ENCODE measurements at regions of chr1 and their contacts with region 1.

Region 1: GRCh38 chr1:2556277-2556677 is at the start of gene TNFRSF14:
- DNase-seq: peak; percentile 73
- H3K4me3 Mint-ChIP-seq: peak within 1 kb of the TSS; percentile 88
- H3K27ac Mint-ChIP-seq: peak within 1 kb of the TSS; percentile 86
- H3K4me1 Mint-ChIP-seq: peaks cover 21% of the 10 kb centered on the region
- H3K27me3 Mint-ChIP-seq: no peaks in the 10 kb centered on the region
- total RNA-seq, gene TNFRSF14: 207 and 215 TPM in 2 replicates

Region 2: GRCh38 chr1:2514863-2515762 is 41.2 kb before region 1 on chr1:
- intact Hi-C with region 1: no loop called
- DNase-seq: no peak
- H3K4me3 Mint-ChIP-seq: no peak overlapping the region
- H3K27ac Mint-ChIP-seq: no peak overlapping the region
- H3K4me1 Mint-ChIP-seq: no peaks in the 10 kb centered on the region
- H3K27me3 Mint-ChIP-seq: peaks cover 1% of the 10 kb centered on the region

Region 3: GRCh38 chr1:2539312-2539907 is 16.9 kb before region 1 on chr1:
- intact Hi-C with region 1: no loop called
- DNase-seq: no peak
- H3K4me3 Mint-ChIP-seq: no peak overlapping the region
- H3K27ac Mint-ChIP-seq: no peak overlapping the region
- H3K4me1 Mint-ChIP-seq: no peaks in the 10 kb centered on the region
- H3K27me3 Mint-ChIP-seq: peaks cover 15% of the 10 kb centered on the region

Region 4: GRCh38 chr1:2578758-2579118 is 22.5 kb after region 1 on chr1:
- intact Hi-C with region 1: loop called (anchors 1 kb)
- DNase-seq: no peak
- H3K4me3 Mint-ChIP-seq: peak overlapping the region; percentile 42
- H3K27ac Mint-ChIP-seq: peak overlapping the region; percentile 95
- H3K4me1 Mint-ChIP-seq: peaks cover 83% of the 10 kb centered on the region
- H3K27me3 Mint-ChIP-seq: no peaks in the 10 kb centered on the region

Region 5: GRCh38 chr1:2786329-2787162 is 230.3 kb after region 1 on chr1:
- intact Hi-C with region 1: loop called (anchors 1 kb)
- DNase-seq: peak; percentile 51
- H3K4me3 Mint-ChIP-seq: no peak overlapping the region
- H3K27ac Mint-ChIP-seq: no peak overlapping the region
- H3K4me1 Mint-ChIP-seq: peaks cover 5% of the 10 kb centered on the region
- H3K27me3 Mint-ChIP-seq: peaks cover 16% of the 10 kb centered on the region

Measured in activated T-helper 1 cell treated with anti-CD3 and anti-CD28 coated beads, Interleukin-12 subunit alpha, Interleukin-12 subunit beta, Interleukin-2, Interleukin-4 antibody, amounts not matched to agents 30 ng/mL and 10 ng/mL and 1 ng/mL, durations not matched to agents 14 hours and 24 hours and 36 hours (primary cell).